Right ventricle myocardium superior (tissue), 1 donor: ENCODE measurements at regions of chr3 and their contacts with region 1.

Region 1: GRCh38 chr3:177694316-177694715 is 497.0 kb upstream of the TBL1XR1 start:
- DNase-seq: no peak
- ATAC-seq: no peak

Region 2: GRCh38 chr3:177359593-177360357 is 334.5 kb before region 1 on chr3:
- intact Hi-C with region 1: no loop called
- DNase-seq: peak; percentile 98
- ATAC-seq: peak; percentile 94

Region 3: GRCh38 chr3:177624514-177625495 is 69.5 kb before region 1 on chr3:
- intact Hi-C with region 1: loop called (anchors 10 kb)
- DNase-seq: no peak
- ATAC-seq: no peak